ENCODE measurements at regions of chr20 and their contacts with region 1.

Region 1: DNA sequence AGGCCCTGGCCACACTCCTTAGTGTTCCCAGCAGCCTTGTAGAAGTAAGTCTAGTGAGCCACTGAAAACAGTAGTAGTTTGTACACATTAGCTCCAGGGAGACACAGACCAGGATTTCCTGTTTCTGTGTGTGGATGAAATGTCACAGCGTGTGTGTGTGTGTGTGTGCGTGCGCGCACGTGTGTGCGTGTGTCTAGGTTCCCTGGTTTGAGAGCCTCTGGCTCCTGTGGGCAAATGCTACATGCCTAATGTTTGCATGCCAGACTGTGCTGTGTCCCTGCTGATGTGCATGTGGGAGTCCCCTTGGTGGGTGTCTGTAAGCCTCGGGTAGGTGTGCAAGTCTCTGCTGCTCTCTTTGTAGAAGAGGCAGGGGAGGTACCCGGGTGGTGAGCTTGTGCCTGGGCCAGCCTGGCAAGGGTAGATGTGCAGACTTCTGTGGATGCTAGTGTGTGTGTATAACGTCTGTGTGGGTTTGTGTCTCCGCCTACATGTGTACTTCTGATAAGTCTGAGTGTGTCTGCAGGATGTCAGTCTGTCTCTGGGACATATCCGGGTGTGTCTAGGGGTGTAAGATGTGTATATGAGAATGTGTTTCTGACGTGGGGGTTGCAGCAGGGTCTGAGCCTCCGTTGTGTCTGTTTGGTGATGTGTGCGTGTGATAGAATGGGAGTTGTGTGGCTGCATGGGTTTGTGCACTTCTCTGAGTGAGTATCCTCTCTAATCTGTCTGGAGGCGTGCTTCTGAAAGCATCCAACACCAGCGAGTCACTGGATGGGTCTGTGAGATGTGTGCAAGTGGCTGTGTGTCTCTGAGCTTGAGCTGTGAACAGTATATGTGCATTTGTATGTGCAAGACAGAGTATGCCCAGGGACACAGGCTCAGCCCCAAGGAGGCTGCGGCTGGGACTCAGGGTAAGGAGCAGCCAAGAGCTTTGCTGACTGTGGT is 19.0 kb upstream of the TLDC2 start:
- DNase-seq: no peak
- CTCF ChIP-seq: no peak

Region 2: DNA sequence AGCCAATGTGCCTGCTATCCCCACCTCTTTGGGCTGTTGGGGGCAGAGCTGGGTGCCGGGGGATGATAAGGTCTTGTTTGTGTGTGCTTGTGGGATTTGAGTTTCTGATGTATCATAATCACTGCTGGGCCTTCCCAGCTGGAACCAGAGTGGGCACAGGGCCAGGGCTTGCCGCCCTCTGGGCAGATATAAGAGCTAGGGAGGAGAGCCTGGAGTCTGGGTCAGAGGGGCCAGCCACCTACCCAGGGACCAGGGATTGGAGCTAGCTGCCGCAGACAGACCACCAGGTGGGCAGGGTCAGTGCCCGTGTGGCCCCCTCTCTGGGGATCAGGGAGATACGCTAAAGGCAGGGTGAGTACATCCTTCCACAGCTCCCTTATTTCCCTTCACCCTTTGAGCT is 15.9 kb after region 1 on chr20:
- CTCF ChIA-PET with region 1: interaction called, 29 read pairs
- POLR2A ChIA-PET with region 1: no interaction called
- DNase-seq: no peak
- CTCF ChIP-seq: no peak

Region 3: GRCh38 chr20:36919715-36920333 is 62.9 kb after region 1 on chr20:
- CTCF ChIA-PET with region 1: no interaction called
- POLR2A ChIA-PET with region 1: no interaction called
- DNase-seq: peak; percentile 71
- CTCF ChIP-seq: peak; percentile 83